SK-N-SH (cell line): ENCODE measurements at regions of chr20 and their contacts with region 1.

Region 1: DNA sequence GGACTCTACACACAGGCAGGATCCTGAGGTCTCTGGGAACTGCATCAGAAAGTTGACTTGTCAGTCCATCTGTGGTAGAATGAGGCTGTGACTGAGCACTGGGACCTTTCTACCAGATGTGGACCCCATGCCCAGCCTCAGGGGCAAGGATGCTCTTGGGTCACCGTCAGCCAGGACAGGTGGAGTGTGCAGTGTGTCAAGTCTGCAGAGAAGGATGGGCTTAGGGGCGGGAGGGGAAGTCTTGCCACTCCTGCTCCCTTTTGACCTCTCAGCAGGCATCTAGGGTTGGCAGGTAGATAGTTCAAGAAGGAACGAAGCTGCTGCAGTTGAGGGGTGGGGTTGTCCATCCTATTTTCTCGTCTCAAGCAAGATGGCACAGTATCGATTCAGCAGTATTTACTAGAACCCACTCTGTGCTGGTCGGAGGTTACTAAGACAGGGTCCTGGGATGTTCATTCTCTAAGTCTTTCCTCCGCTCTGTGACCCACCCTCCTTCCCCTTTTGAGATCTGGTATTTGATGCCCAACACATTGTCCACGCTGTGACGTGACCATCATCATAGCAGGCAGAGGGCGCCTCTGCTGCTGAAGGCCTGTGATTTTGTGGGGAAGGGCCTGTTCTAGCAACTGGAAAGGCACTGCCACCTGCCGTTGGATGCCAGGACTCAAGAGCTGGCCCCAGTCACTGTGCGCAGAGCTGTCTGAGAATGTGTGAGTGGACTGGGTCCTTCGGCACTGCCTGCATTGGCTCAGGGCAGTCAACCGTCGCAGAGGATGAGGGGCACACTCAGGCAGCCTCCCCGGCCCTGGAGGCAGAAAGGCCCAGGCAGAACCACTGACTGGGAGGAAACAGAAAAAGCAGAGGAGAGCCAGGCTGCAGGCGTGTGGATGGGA is 23.2 kb downstream of the RBCK1 start:
- DNase-seq: peak; percentile 91
- H3K4me3 ChIP-seq: no peak overlapping the region
- H3K27ac ChIP-seq: peak overlapping the region; percentile 22 to 51; a peak in 2 of 4 replicates
- H3K4me1 ChIP-seq: peaks cover 0 to 5% of the 10 kb centered on the region in 2 experiments; a peak in 1 of 4 replicates
- H3K27me3 ChIP-seq: no peaks in the 10 kb centered on the region
- CTCF ChIP-seq: peak; percentile 74
- EP300 ChIP-seq: no peak
- RAD21 ChIP-seq: peak; percentile 83

Region 2: GRCh38 chr20:208942-209566 is 222.2 kb before region 1 on chr20:
- CTCF ChIA-PET with region 1: no interaction called
- POLR2A ChIA-PET with region 1: no interaction called
- DNase-seq: peak; percentile 41
- H3K4me3 ChIP-seq: no peak overlapping the region; a peak in 1 of 4 replicates
- H3K27ac ChIP-seq: no peak overlapping the region
- H3K4me1 ChIP-seq: no peaks in the 10 kb centered on the region
- H3K27me3 ChIP-seq: no peaks in the 10 kb centered on the region
- CTCF ChIP-seq: peak; percentile 69
- EP300 ChIP-seq: no peak
- RAD21 ChIP-seq: peak; percentile 83

Region 3: DNA sequence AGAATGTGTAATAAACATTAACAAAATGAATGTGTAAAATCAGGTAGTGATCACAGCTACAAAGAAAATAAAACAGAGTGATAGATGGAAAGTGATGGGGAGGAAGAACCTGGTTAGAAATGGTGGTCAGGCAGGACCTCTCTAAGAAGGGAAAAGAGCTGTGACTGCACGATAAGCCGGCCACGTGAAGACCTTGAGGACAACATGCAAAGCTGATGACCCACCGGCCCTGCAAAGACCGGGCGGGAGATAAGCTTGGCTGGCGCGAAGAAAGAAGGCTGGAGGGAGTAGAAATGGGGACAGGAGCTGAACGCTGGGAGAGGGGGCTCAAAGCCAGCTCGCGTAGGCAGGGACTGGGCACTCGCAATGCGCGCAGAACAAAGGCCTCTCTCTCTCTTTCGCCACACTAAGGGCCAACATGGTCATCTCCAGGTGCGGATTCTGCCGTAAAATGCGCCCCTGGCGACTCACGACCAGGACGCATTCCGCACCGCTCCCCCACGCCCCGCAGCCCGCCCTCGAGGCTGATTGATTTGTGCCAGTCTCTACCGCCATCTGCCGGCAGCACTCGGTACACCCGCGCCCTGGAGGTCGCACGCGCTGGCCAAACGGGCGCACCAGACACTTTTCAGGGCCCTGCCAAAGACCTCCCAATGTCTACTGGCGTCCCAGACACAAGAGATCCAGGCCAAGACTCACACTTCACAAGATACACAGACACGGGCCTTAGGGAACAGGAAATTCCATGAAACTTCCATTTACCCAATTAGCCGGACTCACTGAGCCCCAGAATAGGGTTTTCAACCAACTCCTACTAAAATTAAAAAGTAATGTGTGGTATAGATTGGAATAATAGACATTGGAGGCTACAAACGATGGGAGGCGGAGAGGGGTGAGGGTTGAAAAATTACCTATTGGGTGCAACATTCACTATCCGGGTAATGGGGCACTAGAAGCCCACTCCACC is 164.4 kb before region 1 on chr20:
- CTCF ChIA-PET with region 1: no interaction called
- POLR2A ChIA-PET with region 1: no interaction called
- DNase-seq: peak; percentile 91
- H3K4me3 ChIP-seq: peak overlapping the region; percentile 47 to 57
- H3K27ac ChIP-seq: no peak overlapping the region
- H3K4me1 ChIP-seq: peaks cover 0 to 3% of the 10 kb centered on the region in 2 experiments; a peak in 1 of 4 replicates
- H3K27me3 ChIP-seq: no peaks in the 10 kb centered on the region
- CTCF ChIP-seq: peak; percentile 91
- EP300 ChIP-seq: no peak
- RAD21 ChIP-seq: peak; percentile 86

Region 4: DNA sequence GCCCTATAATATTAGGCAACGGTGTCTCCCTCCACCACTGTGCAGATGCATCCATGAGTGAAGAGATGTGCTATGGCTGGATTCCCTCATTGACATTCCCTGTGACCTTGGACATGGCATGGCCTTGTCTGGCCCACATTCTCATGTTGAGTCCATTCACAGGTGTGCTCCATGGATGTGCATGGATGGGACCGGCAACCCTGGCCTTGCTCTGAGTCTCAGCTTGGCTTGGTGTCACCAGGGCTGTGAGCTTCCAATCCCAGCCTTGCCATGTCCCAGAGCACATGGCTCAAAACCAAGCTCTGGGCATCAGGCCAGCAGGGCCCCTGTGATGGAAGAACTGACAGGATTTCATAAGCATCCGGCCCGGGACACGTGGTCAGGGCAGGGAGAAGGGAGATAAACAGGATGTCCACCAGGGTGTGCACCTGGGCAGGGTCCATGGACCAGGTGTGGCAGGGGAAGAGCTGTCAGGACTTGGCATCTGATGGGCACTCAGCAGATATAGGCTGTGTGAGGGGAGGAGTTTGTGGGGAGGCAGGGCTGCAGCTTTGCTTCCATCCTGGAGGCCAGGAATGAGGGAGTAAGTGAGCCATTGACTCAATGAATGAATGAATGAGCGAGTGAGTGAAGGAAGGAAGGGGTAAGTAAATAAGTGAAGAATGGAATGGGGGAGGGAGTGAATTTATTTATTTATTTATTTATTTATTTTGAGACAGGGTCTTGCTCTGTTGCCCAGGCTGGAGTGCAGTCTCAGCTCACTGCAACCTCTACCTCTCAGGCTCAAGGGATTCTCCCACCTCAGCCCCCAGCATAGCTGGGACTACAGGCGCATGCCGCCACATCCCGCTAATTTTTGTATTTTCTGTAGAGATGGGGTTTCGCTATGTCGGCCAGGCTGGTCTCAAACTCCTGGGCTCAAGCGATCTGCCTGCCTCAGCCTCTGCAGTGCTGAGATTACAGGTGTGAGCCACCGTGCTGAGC is 68.7 kb before region 1 on chr20:
- CTCF ChIA-PET with region 1: interaction called, 29 read pairs
- POLR2A ChIA-PET with region 1: no interaction called
- DNase-seq: peak; percentile 74
- H3K4me3 ChIP-seq: no peak overlapping the region
- H3K27ac ChIP-seq: no peak overlapping the region
- H3K4me1 ChIP-seq: peaks cover 3 to 12% of the 10 kb centered on the region in 2 experiments; a peak in 1 of 4 replicates
- H3K27me3 ChIP-seq: no peaks in the 10 kb centered on the region
- CTCF ChIP-seq: peak; percentile 43
- EP300 ChIP-seq: no peak
- RAD21 ChIP-seq: peak; percentile 47

Region 5: DNA sequence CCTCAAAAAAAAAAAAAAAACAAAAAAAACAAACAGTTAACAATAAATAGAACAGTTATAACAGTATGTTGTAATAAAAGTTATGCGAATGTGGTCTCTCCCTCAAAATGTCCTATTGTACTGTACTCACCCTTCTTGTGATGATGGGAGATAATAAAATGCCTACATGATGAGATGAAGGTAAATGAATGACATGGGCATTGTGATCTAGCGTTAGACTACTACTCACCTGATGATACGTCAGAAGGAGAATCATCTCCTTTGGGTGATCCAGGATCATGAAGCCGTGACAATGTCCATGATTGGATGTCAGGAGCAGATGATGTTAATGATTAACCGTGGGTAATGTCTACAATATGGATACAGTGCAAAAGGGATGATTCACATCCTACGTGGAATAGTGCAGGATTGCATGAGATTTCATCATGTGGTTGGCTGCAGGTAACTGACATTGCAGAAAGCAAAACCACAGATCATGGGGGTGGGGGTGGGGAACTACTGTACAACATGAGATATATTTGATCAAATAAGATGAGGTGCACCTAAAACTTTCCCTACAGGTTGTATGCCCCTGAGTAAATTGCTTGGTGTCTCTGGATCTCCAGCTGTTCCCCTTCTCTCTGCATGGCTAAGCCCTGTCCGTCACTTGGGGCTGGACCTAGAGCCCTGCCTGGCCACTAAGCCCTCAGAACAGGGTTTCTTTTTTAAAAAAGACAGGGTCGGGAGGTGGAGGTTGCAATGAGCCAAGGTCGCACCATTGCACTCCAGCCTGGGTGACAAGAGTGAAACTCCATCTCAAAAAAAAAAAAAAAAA is 29.4 kb before region 1 on chr20:
- CTCF ChIA-PET with region 1: interaction called, 11 read pairs
- POLR2A ChIA-PET with region 1: no interaction called
- DNase-seq: no peak
- H3K4me3 ChIP-seq: no peak overlapping the region
- H3K27ac ChIP-seq: no peak overlapping the region
- H3K4me1 ChIP-seq: peaks cover 0 to 10% of the 10 kb centered on the region in 2 experiments; a peak in 2 of 4 replicates
- H3K27me3 ChIP-seq: no peaks in the 10 kb centered on the region
- CTCF ChIP-seq: no peak
- EP300 ChIP-seq: no peak
- RAD21 ChIP-seq: no peak

Region 6: DNA sequence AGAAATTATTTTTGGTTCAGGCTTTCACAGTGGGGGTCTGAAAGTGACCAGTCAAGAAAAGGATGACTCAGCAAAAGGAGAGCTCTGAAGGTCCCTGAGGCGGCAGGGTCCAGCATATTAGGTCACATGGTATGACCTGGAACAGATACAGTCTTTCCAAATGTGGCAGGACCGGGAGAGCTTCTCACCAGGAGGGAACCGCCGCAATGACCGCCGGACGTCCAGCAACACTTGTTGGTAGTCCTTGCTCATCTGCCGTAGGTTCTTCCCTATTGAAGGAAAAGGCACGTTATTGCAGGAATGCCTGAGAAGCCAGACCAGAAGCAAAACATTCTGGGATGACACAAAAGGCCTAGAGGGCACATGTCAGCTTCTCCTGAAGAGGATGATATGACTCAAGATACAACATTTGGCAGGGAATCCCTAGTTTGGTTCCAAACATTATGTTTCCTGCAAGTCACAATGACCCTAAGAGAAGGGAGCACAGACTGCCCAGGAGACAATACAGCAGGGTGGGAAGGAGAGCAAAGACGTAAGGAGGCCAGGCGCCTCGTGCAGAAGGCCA is 13.7 kb after region 1 on chr20:
- CTCF ChIA-PET with region 1: interaction called, 27 read pairs
- POLR2A ChIA-PET with region 1: no interaction called
- DNase-seq: no peak
- H3K4me3 ChIP-seq: no peak overlapping the region
- H3K27ac ChIP-seq: peak overlapping the region in 1 of 2 experiments; percentile 11; a peak in 1 of 4 replicates
- H3K4me1 ChIP-seq: peaks cover 0 to 13% of the 10 kb centered on the region in 2 experiments; a peak in 2 of 4 replicates
- H3K27me3 ChIP-seq: no peaks in the 10 kb centered on the region
- CTCF ChIP-seq: no peak
- EP300 ChIP-seq: no peak
- RAD21 ChIP-seq: no peak